WTC11 (cell line): ENCODE measurements at regions of chr5 and their contacts with region 1.

Region 1: GRCh38 chr5:34915139-34915855 is at the starts of genes BRIX1 and RAD1:
- DNase-seq: peak; percentile 96
- ATAC-seq: peak; percentile 99
- H3K4me3 Mint-ChIP-seq: no peak within 1 kb of the TSS
- H3K27ac Mint-ChIP-seq: no peak within 1 kb of the TSS
- H3K4me1 Mint-ChIP-seq: peaks cover 25% of the 10 kb centered on the region
- H3K27me3 Mint-ChIP-seq: no peaks in the 10 kb centered on the region
- CTCF ChIP-seq: no peak
- total RNA-seq, gene BRIX1: 48.0 to 57.3 TPM (median 49.4 TPM) in 3 replicates
- total RNA-seq, gene RAD1: 28.4 to 33.4 TPM (median 28.5 TPM) in 3 replicates

Region 2: GRCh38 chr5:34838785-34839714 is 76.2 kb before region 1 on chr5 and contains the start of gene TTC23L:
- CTCF ChIA-PET with region 1: interaction called, 6 read pairs
- POLR2A ChIA-PET with region 1: interaction called, 11 read pairs
- DNase-seq: peak; percentile 95
- ATAC-seq: peak; percentile 88
- H3K4me3 Mint-ChIP-seq: peak within 1 kb of the TSS; percentile 97
- H3K27ac Mint-ChIP-seq: peak within 1 kb of the TSS; percentile 100
- H3K4me1 Mint-ChIP-seq: peaks cover 18% of the 10 kb centered on the region
- H3K27me3 Mint-ChIP-seq: peaks cover 2% of the 10 kb centered on the region; the same call in 1 of the 2 replicates
- CTCF ChIP-seq: no peak
- total RNA-seq, gene TTC23L: 1.6 to 2.4 TPM (median 1.9 TPM) in 3 replicates

Region 3: GRCh38 chr5:34898258-34898895 is 16.9 kb before region 1 on chr5:
- CTCF ChIA-PET with region 1: interaction called, 12 read pairs
- POLR2A ChIA-PET with region 1: interaction called, 3 read pairs
- DNase-seq: peak; percentile 67
- ATAC-seq: peak; percentile 91
- H3K4me3 Mint-ChIP-seq: no peak overlapping the region
- H3K27ac Mint-ChIP-seq: no peak overlapping the region; the same call in 1 of the 2 replicates
- H3K4me1 Mint-ChIP-seq: peaks cover 24% of the 10 kb centered on the region
- H3K27me3 Mint-ChIP-seq: no peaks in the 10 kb centered on the region
- CTCF ChIP-seq: peak; percentile 66

Region 4: DNA sequence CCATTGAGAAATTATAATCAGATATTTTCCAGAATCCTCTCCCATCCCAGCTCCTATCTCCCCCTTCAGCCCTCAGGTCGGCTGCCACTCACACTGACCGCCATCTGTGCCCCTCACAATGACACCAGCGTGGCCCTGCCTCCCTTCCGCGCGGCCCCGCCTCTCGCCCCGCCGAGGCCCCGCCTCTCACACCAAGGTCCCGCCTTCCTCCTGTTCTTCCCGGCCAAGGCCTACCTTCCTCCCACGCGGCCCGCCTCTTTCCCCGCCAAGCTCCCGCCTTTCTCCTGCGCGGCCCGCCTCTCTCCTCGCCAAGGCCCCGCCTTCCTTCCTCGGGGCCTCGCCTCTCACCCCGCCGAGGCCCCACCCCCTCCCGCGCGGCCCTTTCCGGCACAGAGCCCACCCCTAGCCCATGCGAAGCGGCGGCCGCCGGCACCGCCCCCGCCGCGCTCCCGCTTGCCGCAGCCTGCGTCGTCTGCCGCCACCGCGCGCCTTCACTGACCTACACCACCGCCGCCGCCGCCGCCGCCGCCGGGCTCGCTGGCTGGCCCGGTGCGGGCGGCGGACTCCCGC is 13.9 kb after region 1 on chr5 and contains the start of gene DNAJC21:
- CTCF ChIA-PET with region 1: interaction called, 19 read pairs
- POLR2A ChIA-PET with region 1: interaction called, 59 read pairs
- DNase-seq: peak; percentile 98
- ATAC-seq: peak; percentile 95
- H3K4me3 Mint-ChIP-seq: peak within 1 kb of the TSS; percentile 97
- H3K27ac Mint-ChIP-seq: peak within 1 kb of the TSS; percentile 98
- H3K4me1 Mint-ChIP-seq: peaks cover 19% of the 10 kb centered on the region
- H3K27me3 Mint-ChIP-seq: no peaks in the 10 kb centered on the region
- CTCF ChIP-seq: no peak
- total RNA-seq, gene DNAJC21: 48.7 to 62.5 TPM (median 49.6 TPM) in 3 replicates

Region 5: GRCh38 chr5:34957857-34958690 is 42.8 kb after region 1 on chr5:
- CTCF ChIA-PET with region 1: interaction called, 10 read pairs
- POLR2A ChIA-PET with region 1: no interaction called
- DNase-seq: no peak
- ATAC-seq: peak; percentile 91
- H3K4me3 Mint-ChIP-seq: no peak overlapping the region
- H3K27ac Mint-ChIP-seq: no peak overlapping the region; the same call in 1 of the 2 replicates
- H3K4me1 Mint-ChIP-seq: no peaks in the 10 kb centered on the region
- H3K27me3 Mint-ChIP-seq: no peaks in the 10 kb centered on the region
- CTCF ChIP-seq: no peak